OCI-LY7 (cell line): ENCODE measurements at regions of chr6 and their contacts with region 1.

Region 1: GRCh38 chr6:26156076-26156849 is 69.0 kb downstream of the HFE start:
- DNase-seq: peak; percentile 88
- H3K4me3 ChIP-seq: peak overlapping the region; percentile 79
- H3K27ac ChIP-seq: peak overlapping the region; percentile 99
- H3K4me1 ChIP-seq: peaks cover 28% of the 10 kb centered on the region
- CTCF ChIP-seq: no peak

Region 2: GRCh38 chr6:25934735-25935306 is 221.4 kb before region 1 on chr6:
- CTCF ChIA-PET with region 1: no interaction called
- POLR2A ChIA-PET with region 1: no interaction called
- intact Hi-C with region 1: no loop called
- DNase-seq: no peak
- H3K4me3 ChIP-seq: no peak overlapping the region
- H3K27ac ChIP-seq: no peak overlapping the region
- H3K4me1 ChIP-seq: no peaks in the 10 kb centered on the region
- CTCF ChIP-seq: no peak

Region 3: GRCh38 chr6:26012061-26012460 is 144.2 kb before region 1 on chr6:
- CTCF ChIA-PET with region 1: no interaction called
- POLR2A ChIA-PET with region 1: no interaction called
- intact Hi-C with region 1: no loop called
- DNase-seq: no peak
- H3K4me3 ChIP-seq: no peak overlapping the region
- H3K27ac ChIP-seq: no peak overlapping the region
- H3K4me1 ChIP-seq: peaks cover under 1% of the 10 kb centered on the region
- CTCF ChIP-seq: no peak

Region 4: DNA sequence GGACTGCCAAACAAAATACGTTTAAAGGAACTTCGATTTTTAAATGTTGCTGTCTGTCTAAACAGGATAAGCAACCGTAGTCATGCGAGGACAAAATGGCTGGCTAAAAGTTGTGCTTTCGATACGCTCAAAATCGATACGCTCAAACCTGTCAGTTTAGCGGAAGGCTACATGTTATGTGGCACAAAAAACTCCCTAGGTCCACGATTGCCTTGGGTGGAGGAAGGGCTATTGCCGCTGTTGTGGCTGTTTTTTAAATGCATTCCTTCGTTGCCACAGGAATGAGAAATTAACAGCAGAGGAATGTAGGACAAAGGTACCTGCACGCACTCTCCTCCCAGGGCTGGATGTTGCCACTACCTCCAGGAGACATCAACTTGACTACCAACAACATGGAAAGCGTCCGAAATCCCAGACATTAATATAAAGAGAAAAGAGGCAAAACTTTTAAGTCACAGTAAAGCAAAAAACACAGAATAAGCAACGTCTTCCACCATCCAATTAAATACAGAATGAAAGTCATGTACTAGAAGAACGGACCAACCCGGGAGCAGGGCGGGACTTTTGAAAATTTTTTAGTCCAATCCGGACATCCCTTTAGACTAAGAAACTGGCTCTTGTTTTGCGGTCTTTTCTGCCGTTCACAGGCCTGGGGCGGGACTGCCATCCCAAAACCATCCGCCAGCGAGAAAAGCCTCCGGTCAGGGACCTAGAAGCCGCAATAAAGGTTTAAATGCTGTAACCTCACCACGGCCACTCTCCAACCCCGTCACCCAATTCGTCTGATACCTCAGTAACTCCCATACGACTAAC is 101.2 kb before region 1 on chr6:
- CTCF ChIA-PET with region 1: no interaction called
- POLR2A ChIA-PET with region 1: interaction called, 6 read pairs
- intact Hi-C with region 1: loop called (anchors 2 kb)
- DNase-seq: peak; percentile 93
- H3K4me3 ChIP-seq: peak overlapping the region; percentile 70
- H3K27ac ChIP-seq: peak overlapping the region; percentile 93
- H3K4me1 ChIP-seq: peaks cover 41% of the 10 kb centered on the region
- CTCF ChIP-seq: no peak

Region 5: GRCh38 chr6:26141378-26141904 is 14.8 kb before region 1 on chr6:
- CTCF ChIA-PET with region 1: no interaction called
- POLR2A ChIA-PET with region 1: interaction called, 21 read pairs
- intact Hi-C with region 1: no loop called
- DNase-seq: no peak
- H3K4me3 ChIP-seq: no peak overlapping the region
- H3K27ac ChIP-seq: no peak overlapping the region
- H3K4me1 ChIP-seq: peaks cover 9% of the 10 kb centered on the region
- CTCF ChIP-seq: no peak

Region 6: DNA sequence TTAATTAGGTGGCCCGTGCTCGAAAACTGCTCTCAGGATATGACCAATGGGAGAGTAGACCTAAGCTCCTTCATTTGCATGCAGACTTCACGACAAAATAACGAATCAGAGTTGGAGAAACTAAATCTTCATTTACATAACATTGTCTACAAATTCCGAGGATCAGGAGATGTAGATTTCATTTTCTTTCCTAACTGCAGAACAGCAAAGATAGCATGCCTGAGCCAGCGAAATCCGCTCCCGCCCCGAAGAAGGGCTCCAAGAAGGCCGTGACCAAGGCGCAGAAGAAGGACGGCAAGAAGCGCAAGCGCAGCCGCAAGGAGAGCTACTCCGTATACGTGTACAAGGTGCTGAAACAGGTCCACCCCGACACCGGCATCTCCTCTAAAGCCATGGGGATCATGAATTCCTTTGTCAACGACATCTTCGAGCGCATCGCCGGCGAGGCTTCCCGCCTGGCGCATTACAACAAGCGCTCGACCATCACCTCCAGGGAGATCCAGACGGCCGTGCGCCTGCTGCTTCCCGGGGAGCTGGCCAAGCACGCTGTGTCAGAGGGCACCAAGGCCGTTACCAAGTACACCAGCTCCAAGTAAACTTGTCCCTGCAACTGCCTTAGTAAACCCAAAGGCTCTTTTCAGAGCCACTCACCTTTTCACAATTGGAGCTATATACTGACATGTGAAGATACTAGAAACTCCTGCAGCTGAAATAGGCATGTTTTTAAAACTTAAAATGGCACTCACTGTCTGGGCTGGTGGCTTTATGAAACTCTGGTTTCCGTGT is 27.5 kb after region 1 on chr6:
- CTCF ChIA-PET with region 1: no interaction called
- POLR2A ChIA-PET with region 1: interaction called, 31 read pairs
- intact Hi-C with region 1: no loop called
- DNase-seq: no peak
- H3K4me3 ChIP-seq: no peak overlapping the region
- H3K27ac ChIP-seq: no peak overlapping the region
- H3K4me1 ChIP-seq: peaks cover 22% of the 10 kb centered on the region
- CTCF ChIP-seq: no peak

Region 7: GRCh38 chr6:26285143-26286134 is 129.2 kb after region 1 on chr6:
- CTCF ChIA-PET with region 1: no interaction called
- POLR2A ChIA-PET with region 1: interaction called, 17 read pairs
- intact Hi-C with region 1: no loop called
- DNase-seq: peak; percentile 99
- H3K4me3 ChIP-seq: peak overlapping the region; percentile 80
- H3K27ac ChIP-seq: peak overlapping the region; percentile 96
- H3K4me1 ChIP-seq: peaks cover 32% of the 10 kb centered on the region
- CTCF ChIP-seq: 0 out of 2 replicates have a peak, but pooled peaks have one; percentile 0